Astrocyte of the spinal cord (primary cell): ENCODE measurements at regions of chr2 and their contacts with region 1.

Region 1: GRCh38 chr2:9967053-9967775 is 15.7 kb downstream of the GRHL1 start:
- DNase-seq: no peak
- H3K4me3 ChIP-seq: no peak overlapping the region
- CTCF ChIP-seq: no peak

Region 2: DNA sequence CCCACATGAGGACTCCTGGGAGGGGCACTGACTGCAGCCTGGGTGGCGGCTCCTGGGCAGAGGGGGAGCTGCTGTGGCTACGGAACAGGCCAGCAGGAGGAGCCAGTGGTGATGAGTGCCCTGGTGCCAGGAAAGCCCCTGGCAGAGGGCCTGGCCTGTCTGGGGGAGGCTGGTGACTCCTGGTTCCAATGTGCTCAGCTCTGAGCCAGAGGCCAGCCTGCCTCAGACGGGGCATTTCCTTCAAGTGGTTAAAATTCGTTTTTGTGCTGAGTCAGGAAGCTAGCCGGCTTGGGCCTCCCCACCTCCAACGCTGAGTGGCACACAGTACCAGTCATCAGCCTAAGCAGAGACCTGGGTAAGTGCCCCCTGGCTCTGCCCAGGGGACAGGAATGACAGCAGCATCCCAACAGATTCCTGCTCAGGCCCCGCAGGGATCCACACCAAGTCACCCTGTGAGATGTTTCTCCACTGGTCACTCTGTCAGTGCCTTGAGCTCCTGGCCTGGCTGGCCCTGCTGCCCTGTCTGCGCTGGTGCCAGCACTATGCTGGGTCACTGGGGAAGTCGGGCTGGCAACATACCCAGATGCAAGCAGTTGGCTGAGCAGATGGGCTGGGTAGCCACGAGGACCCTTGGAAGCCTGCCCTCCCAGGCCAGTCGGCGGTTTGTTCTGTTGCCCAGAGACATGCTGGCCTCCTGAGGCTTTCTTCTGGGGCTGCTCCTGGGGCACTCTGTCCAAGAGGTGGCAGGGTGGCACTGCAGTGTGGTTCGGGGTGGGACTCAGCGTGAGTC is 69.1 kb after region 1 on chr2:
- in situ Hi-C with region 1: loop called (anchors 10 kb)
- DNase-seq: peak; percentile 59
- H3K4me3 ChIP-seq: no peak overlapping the region
- CTCF ChIP-seq: peak; percentile 53